ENCODE measurements at regions of chrX and their contacts with region 1.

Region 1: GRCh38 chrX:71128915-71129765 is 10.7 kb downstream of the MED12 start:
- DNase-seq: peak; percentile 59 to 87 (median 74)
- ATAC-seq: peak; percentile 96
- H3K4me3 ChIP-seq: no peak overlapping the region
- H3K4me3 Mint-ChIP-seq: no peak overlapping the region
- H3K27ac ChIP-seq: no peak overlapping the region
- H3K27ac Mint-ChIP-seq: peak overlapping the region; percentile 38
- H3K4me1 ChIP-seq: peaks cover 17% of the 10 kb centered on the region
- H3K4me1 Mint-ChIP-seq: peaks cover 18% of the 10 kb centered on the region
- H3K27me3 ChIP-seq: no peaks in the 10 kb centered on the region
- H3K27me3 Mint-ChIP-seq: no peaks in the 10 kb centered on the region
- CTCF ChIP-seq: peak; percentile 60

Region 2: DNA sequence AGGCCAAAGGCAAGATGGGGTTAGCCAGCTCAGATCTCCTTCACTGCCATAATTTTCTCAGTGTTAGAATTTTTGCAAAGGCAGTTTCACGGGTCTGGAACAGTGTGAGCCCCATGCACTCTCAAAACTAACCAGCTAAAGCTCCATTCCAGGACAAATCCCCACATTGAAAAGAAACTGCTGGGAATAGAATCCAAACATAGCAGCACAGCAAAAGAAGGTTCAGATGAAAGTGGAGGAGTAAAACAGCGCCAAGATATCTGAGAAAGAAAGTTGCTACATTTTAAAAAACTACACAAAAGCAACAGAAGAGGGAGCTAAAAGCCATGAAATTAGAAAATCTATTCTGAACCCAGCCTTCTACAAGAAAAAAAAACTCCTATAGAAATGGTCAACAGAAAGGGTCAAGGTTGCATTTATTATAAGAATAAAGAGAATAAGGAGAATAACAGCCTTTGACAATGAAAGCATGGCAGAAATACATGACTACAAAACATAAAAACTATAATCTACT is 158.6 kb before region 1 on chrX:
- CTCF ChIA-PET with region 1: interaction called, 3 read pairs
- POLR2A ChIA-PET with region 1: no interaction called
- intact Hi-C with region 1: loop called in 1 of 2 experiments (anchors 2 kb)
- DNase-seq: peak in 3 of 14 experiments; percentile 16 to 26 (median 24)
- ATAC-seq: no peak
- H3K4me3 ChIP-seq: no peak overlapping the region
- H3K4me3 Mint-ChIP-seq: no peak overlapping the region
- H3K27ac ChIP-seq: no peak overlapping the region
- H3K27ac Mint-ChIP-seq: no peak overlapping the region
- H3K4me1 ChIP-seq: peaks cover 4% of the 10 kb centered on the region
- H3K4me1 Mint-ChIP-seq: peaks cover 9% of the 10 kb centered on the region
- H3K27me3 ChIP-seq: no peaks in the 10 kb centered on the region
- H3K27me3 Mint-ChIP-seq: no peaks in the 10 kb centered on the region
- CTCF ChIP-seq: peak; percentile 38

Region 3: DNA sequence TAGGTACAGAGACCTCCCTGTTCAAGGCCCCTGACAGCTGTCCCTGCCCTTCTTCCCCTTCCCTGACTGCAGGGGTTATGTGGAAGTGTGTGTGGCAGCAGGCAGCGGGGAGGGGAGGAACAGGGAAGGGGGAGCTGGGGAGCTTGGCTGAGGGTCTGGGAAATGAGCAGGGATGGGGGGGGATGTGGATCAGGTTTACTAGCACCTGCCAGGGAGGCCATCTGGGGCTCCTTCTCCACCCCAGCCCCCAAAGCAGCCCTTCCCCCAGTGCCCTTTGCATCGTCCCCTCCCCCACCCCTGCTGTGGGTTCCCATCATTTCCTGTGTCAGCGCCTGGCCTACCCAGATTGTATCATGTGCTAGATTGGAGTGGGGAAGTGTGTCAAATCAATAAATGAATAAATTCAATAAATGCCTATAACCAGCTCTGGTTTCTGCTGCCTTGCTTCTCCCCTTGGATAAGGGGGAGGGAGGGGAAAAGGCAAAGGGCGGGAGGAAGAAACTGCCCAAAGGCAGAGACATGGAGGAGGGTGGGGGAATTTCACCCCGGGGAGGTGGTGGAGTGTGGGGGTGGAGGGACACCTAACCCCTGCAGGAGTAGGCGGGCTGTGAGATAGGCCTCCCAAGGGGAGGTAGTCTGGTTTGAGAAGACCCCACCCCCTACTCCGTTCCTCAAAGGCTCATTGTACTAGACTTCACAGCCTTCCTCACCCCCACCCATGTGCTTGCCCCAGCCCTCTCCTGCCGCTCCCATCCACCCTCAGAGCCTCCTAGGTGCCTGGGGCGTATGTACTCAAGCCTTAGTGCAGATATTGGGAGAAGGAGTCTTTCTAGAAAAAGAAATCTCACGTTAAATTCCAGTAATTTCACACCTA is 25.8 kb before region 1 on chrX:
- CTCF ChIA-PET with region 1: interaction called, 40 read pairs
- POLR2A ChIA-PET with region 1: interaction called, 29 read pairs
- intact Hi-C with region 1: loop called (anchors 1 kb)
- DNase-seq: peak in 12 of 14 experiments; percentile 27 to 77 (median 56)
- ATAC-seq: peak; percentile 60
- H3K4me3 ChIP-seq: peak overlapping the region; percentile 35
- H3K4me3 Mint-ChIP-seq: peak overlapping the region; percentile 74
- H3K27ac ChIP-seq: peak overlapping the region; percentile 72 to 76
- H3K27ac Mint-ChIP-seq: peak overlapping the region; percentile 93
- H3K4me1 ChIP-seq: peaks cover 90% of the 10 kb centered on the region
- H3K4me1 Mint-ChIP-seq: peaks cover 87% of the 10 kb centered on the region
- H3K27me3 ChIP-seq: no peaks in the 10 kb centered on the region
- H3K27me3 Mint-ChIP-seq: no peaks in the 10 kb centered on the region
- CTCF ChIP-seq: no peak

Region 4: DNA sequence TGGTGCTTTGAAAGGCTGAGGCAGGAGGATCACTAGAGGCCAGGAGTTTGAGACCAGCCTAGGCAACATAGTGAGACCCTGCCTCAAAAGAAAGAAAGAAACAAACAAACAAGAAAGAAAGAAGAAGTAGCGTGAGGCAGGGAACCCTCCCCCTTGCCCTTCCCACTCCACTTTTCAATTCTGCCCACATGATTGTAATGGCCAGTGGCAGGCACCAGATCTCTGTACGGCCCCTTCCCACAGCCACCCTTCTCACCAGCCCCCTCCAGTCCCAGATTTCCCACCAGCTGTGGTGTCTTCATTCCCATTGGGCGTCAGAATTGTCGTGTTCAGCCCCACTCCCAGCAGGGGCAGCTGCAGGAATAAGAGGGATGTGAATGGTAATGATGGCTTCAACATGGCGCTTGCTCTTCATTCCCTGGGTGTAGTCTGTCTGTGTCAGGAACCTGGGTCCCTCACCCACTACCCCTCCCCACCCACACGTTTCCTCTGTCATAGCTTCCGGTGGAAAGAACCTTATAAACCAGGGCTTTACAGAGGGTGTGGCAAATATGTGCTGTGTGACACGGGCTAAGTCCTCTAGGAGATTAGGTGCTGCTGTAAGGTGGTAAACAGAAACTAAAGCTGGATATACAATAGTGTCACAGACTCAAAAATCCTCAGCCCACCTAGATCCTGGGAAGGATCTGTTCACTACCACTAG is 17.8 kb before region 1 on chrX and contains the start of gene IL2RG:
- CTCF ChIA-PET with region 1: interaction called, 23 read pairs
- POLR2A ChIA-PET with region 1: interaction called, 18 read pairs
- intact Hi-C with region 1: no loop called
- DNase-seq: peak; percentile 56 to 94 (median 70)
- ATAC-seq: peak; percentile 81
- H3K4me3 ChIP-seq: peak within 1 kb of the TSS; percentile 93
- H3K4me3 Mint-ChIP-seq: peak within 1 kb of the TSS; percentile 98
- H3K27ac ChIP-seq: peak within 1 kb of the TSS; percentile 96 to 99
- H3K27ac Mint-ChIP-seq: peak within 1 kb of the TSS; percentile 99
- H3K4me1 ChIP-seq: peaks cover 56% of the 10 kb centered on the region
- H3K4me1 Mint-ChIP-seq: peaks cover 51% of the 10 kb centered on the region
- H3K27me3 ChIP-seq: no peaks in the 10 kb centered on the region
- H3K27me3 Mint-ChIP-seq: no peaks in the 10 kb centered on the region
- CTCF ChIP-seq: no peak
- total RNA-seq, gene IL2RG: 213 to 225 TPM

Region 5: DNA sequence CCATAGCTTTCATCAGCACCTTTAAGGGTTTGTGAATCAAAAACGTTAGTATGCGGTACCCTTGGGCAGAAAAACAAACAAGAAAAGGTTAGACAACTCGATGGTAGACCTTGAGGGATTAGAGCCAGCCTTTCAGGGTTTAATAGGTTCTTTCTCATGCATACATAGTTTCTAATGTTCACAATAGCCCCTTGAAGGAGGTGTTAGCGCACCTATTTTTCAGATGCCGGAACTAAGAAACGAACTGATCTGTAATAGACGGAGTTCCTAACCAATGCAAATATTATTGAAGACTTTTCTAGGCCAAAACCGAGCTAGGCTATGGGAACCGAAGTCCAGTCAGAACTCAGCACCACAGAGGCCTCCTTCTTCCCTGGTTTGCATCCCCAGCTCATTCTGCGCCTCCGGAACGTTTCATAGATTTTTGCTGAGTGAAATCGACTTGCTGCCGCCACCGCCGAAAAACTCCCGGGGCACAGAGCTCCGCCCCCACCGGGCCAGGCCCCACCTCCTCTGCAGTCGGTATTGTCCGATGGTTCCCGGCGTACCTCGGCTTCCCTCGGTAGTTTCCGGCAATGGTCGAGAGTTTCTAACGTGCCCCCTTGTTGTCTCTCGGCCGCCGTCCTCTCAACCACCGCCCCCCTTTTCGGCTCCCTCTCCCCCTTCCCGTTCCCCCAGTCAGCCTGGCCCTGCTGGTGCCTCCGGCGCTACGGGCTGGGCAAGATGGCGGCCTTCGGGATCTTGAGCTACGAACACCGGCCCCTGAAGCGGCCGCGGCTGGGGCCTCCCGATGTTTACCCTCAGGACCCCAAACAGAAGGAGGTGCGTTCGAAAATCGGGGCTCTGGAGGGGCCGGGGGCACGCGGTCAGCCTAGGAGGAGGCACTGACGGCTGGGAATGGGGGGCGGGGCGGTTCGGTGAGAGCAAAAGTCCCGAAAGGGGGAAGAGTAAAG is 10.8 kb before region 1 on chrX and contains the start of gene MED12:
- CTCF ChIA-PET with region 1: interaction called, 23 read pairs
- POLR2A ChIA-PET with region 1: interaction called, 9 read pairs
- intact Hi-C with region 1: no loop called
- DNase-seq: peak; percentile 63 to 89 (median 76)
- ATAC-seq: peak; percentile 95
- H3K4me3 ChIP-seq: peak within 1 kb of the TSS; percentile 83
- H3K4me3 Mint-ChIP-seq: peak within 1 kb of the TSS; percentile 93
- H3K27ac ChIP-seq: peak within 1 kb of the TSS; percentile 77 to 86
- H3K27ac Mint-ChIP-seq: peak within 1 kb of the TSS; percentile 94
- H3K4me1 ChIP-seq: peaks cover 40% of the 10 kb centered on the region
- H3K4me1 Mint-ChIP-seq: peaks cover 36% of the 10 kb centered on the region
- H3K27me3 ChIP-seq: no peaks in the 10 kb centered on the region
- H3K27me3 Mint-ChIP-seq: no peaks in the 10 kb centered on the region
- CTCF ChIP-seq: no peak
- total RNA-seq, gene MED12: 44.5 to 55.3 TPM

Region 6: DNA sequence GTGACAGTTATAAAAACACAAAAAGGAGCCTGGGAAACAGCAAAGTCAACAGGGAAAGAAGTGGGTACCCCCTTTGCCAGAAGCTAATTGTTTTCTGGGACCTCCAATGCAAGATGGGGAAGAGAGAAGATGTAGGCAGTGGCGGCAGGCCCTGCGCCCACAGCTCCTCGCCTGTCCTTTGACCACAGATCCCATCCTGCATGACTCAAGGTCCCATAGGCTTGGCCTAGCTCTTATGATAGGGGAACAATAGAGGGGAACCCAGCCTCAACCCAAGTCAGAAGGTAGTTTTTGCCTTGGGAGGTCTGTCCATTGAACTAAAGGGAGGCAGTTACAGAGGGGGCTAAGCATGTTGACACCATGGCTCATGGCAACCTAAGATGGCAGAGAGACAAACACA is 110.6 kb after region 1 on chrX:
- CTCF ChIA-PET with region 1: no interaction called
- POLR2A ChIA-PET with region 1: no interaction called
- intact Hi-C with region 1: no loop called
- DNase-seq: no peak
- ATAC-seq: no peak
- H3K4me3 ChIP-seq: no peak overlapping the region
- H3K4me3 Mint-ChIP-seq: no peak overlapping the region
- H3K27ac ChIP-seq: no peak overlapping the region
- H3K27ac Mint-ChIP-seq: no peak overlapping the region
- H3K4me1 ChIP-seq: no peaks in the 10 kb centered on the region
- H3K4me1 Mint-ChIP-seq: no peaks in the 10 kb centered on the region
- H3K27me3 ChIP-seq: no peaks in the 10 kb centered on the region
- H3K27me3 Mint-ChIP-seq: no peaks in the 10 kb centered on the region
- CTCF ChIP-seq: no peak